ENCODE measurements at regions of chr17 and their contacts with region 1.

Region 1: DNA sequence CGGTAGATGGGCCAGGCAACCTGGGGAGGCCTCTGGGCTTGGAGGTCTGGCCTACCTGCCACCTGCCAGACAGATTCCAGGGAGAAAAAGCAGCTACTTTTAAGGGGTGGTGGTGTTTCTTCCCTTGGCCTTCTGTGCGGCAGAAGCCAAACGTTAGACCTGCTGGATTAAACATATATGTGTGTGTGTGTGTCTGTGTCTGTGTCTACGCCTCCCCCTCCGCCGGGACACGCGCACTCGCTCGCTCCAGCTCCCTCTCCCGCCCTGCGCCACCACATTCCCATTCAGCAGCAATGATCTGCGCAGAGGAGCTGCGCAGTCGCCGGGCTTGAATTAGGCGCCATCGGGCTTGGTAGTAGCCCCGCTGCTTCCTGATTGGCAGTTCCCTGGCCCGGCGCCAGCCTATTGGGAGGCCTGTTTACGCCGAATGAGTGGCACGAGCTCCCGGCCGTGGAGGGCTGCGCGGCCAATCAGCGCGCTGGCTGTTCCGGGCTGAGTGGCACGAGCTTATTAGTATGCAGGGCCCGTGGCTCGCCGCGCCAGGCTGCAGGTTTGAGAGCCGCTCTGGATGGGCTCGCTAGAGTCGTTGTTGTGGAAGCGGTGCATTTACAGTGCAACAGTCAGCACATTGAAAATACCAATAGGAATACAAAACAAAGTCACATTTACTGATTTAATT is at the start of gene BAHCC1:
- DNase-seq: peak; percentile 45 to 87 (median 77)
- ATAC-seq: peak; percentile 65
- H3K4me3 ChIP-seq: no peak within 1 kb of the TSS
- H3K4me3 Mint-ChIP-seq: peak within 1 kb of the TSS; percentile 43
- H3K27ac ChIP-seq: no peak within 1 kb of the TSS
- H3K27ac Mint-ChIP-seq: no peak within 1 kb of the TSS
- H3K4me1 ChIP-seq: peaks cover 56% of the 10 kb centered on the region
- H3K4me1 Mint-ChIP-seq: peaks cover 29% of the 10 kb centered on the region
- H3K27me3 ChIP-seq: peaks cover 69 to 70% of the 10 kb centered on the region in 2 experiments
- H3K27me3 Mint-ChIP-seq: peaks cover 47% of the 10 kb centered on the region
- CTCF ChIP-seq: no peak
- total RNA-seq, gene BAHCC1: 0.08 to 0.24 TPM

Region 2: DNA sequence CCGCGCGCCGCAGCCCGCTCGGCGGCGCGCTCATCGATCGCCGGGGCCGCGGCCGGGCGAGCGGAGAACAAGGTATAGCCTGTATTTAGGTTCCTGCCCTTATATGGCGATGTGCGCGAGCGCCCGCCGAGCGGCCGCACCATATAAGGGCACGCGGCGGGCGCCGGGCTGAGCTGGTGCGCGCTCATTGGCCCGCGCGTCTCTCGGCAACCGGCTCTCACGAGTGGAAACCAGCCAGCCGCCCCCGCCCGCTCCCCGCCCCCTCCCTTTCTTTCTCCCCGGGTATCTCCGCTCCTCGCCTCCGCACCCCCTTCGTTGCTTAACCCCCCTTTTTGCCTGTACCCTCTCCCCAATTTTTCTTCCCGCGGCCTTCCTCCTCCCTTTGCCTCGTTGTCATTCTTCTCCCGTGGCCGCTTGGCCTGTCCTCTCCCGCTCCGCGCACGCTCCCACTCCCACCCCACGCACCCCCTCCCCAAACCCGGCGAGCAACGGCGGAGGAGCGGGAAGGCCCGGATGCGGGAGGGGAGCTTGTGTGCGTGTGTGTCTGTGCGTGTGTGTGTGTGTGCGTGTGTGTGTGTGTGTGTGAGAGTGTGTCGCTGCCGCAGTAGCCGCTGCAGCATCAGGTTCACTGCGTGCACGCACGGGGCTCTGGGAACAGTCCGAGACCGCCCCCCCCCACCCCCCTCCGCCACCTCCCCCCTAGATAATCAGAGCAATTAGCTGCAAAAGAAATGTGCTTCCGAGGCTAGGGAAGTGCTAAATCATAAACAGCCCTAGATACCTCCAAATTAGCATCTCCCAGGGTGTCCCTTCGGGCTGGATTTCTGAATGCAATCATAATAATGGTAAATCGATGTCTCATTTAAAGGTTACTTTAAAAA is 1584.7 kb before region 1 on chr17:
- CTCF ChIA-PET with region 1: no interaction called
- POLR2A ChIA-PET with region 1: no interaction called
- intact Hi-C with region 1: loop called in 1 of 2 experiments (anchors 5 kb)
- DNase-seq: peak; percentile 48 to 91 (median 74)
- ATAC-seq: peak; percentile 91
- H3K4me3 ChIP-seq: no peak overlapping the region
- H3K4me3 Mint-ChIP-seq: no peak overlapping the region
- H3K27ac ChIP-seq: no peak overlapping the region
- H3K27ac Mint-ChIP-seq: no peak overlapping the region
- H3K4me1 ChIP-seq: peaks cover 40% of the 10 kb centered on the region
- H3K4me1 Mint-ChIP-seq: peaks cover 28% of the 10 kb centered on the region
- H3K27me3 ChIP-seq: peaks cover 75 to 82% of the 10 kb centered on the region in 2 experiments
- H3K27me3 Mint-ChIP-seq: peaks cover 67% of the 10 kb centered on the region
- CTCF ChIP-seq: no peak

Region 3: GRCh38 chr17:80931936-80932265 is 463.2 kb before region 1 on chr17:
- CTCF ChIA-PET with region 1: no interaction called
- POLR2A ChIA-PET with region 1: no interaction called
- intact Hi-C with region 1: no loop called
- DNase-seq: no peak
- ATAC-seq: no peak
- H3K4me3 ChIP-seq: no peak overlapping the region
- H3K4me3 Mint-ChIP-seq: no peak overlapping the region
- H3K27ac ChIP-seq: no peak overlapping the region
- H3K27ac Mint-ChIP-seq: no peak overlapping the region
- H3K4me1 ChIP-seq: no peaks in the 10 kb centered on the region
- H3K4me1 Mint-ChIP-seq: no peaks in the 10 kb centered on the region
- H3K27me3 ChIP-seq: no peaks in the 10 kb centered on the region
- H3K27me3 Mint-ChIP-seq: no peaks in the 10 kb centered on the region
- CTCF ChIP-seq: no peak

Region 4: GRCh38 chr17:81424151-81425017 is 29.3 kb after region 1 on chr17:
- CTCF ChIA-PET with region 1: no interaction called
- POLR2A ChIA-PET with region 1: no interaction called
- intact Hi-C with region 1: no loop called
- DNase-seq: peak in 1 of 9 experiments; percentile 44
- ATAC-seq: no peak
- H3K4me3 ChIP-seq: no peak overlapping the region
- H3K4me3 Mint-ChIP-seq: no peak overlapping the region
- H3K27ac ChIP-seq: no peak overlapping the region
- H3K27ac Mint-ChIP-seq: no peak overlapping the region
- H3K4me1 ChIP-seq: peaks cover 29% of the 10 kb centered on the region
- H3K4me1 Mint-ChIP-seq: peaks cover 9% of the 10 kb centered on the region
- H3K27me3 ChIP-seq: peaks cover 21 to 36% of the 10 kb centered on the region in 2 experiments
- H3K27me3 Mint-ChIP-seq: peaks cover 5% of the 10 kb centered on the region
- CTCF ChIP-seq: no peak

Region 5: DNA sequence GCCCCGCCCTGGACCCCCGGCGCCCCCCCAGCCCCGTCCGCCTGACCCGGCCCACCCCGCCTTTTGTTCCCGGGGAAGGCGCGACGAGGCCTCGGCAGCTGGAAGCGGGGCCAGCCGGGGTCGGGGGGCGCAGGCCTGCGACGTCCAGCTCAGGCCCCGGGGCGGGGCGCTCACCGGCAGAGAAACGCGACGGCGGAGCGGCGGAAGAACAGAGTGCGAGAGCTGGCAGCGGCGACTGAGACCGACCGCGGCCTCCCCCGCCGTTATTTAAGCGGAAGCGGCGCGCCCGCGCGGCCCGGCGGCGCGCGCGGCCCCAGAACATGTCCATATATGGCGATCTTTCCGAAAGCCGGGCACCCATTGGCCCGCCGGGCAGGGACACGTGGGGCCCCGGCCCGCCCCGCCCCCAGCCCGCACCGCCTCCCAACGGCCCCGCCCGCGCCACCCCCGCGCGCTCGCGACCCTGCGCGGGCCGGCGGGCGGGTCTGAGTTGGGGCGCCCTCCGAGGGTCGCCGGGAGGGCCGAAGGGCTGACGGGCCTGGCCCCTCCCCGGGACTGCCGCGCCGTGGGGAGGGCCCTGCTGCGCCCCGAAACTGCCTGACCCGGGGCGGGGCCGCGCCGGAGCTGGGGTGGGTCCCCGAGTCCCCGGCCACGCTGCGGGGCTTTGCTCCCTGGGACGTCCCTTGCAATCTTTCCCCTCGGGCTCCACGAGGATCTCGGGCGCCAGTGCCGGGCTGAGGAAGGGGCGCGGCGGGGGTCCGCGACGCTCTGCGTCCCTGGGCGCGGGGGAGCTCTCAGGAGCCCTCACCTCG is 117.7 kb after region 1 on chr17 and contains the start of gene ACTG1:
- CTCF ChIA-PET with region 1: no interaction called
- POLR2A ChIA-PET with region 1: interaction called, 4 read pairs
- intact Hi-C with region 1: loop called (anchors 5 to 10 kb)
- DNase-seq: peak; percentile 87 to 97 (median 92)
- ATAC-seq: peak; percentile 60
- H3K4me3 ChIP-seq: peak within 1 kb of the TSS; percentile 84 to 93
- H3K4me3 Mint-ChIP-seq: peak within 1 kb of the TSS; percentile 98
- H3K27ac ChIP-seq: peak within 1 kb of the TSS; percentile 56 to 93
- H3K27ac Mint-ChIP-seq: peak within 1 kb of the TSS; percentile 98
- H3K4me1 ChIP-seq: peaks cover 49% of the 10 kb centered on the region
- H3K4me1 Mint-ChIP-seq: peaks cover 57% of the 10 kb centered on the region
- H3K27me3 ChIP-seq: no peaks in the 10 kb centered on the region
- H3K27me3 Mint-ChIP-seq: no peaks in the 10 kb centered on the region
- CTCF ChIP-seq: no peak
- total RNA-seq, gene ACTG1: 1,370 to 1,375 TPM